Activated CD4-positive, alpha-beta T cell treated with anti-CD3 and anti-CD28 coated beads, Interleukin-2, amount 10 ng/mL, durations not matched to agents 24 days and 14 days (primary cell): ENCODE measurements at regions of chr7 and their contacts with region 1.

Region 1: GRCh38 chr7:105808703-105809590 is 67.5 kb downstream of the ATXN7L1 start:
- DNase-seq: peak; percentile 93
- H3K4me3 Mint-ChIP-seq: peak overlapping the region; percentile 71
- H3K27ac Mint-ChIP-seq: peak overlapping the region; percentile 92
- H3K4me1 Mint-ChIP-seq: peaks cover 75% of the 10 kb centered on the region
- H3K27me3 Mint-ChIP-seq: peaks cover 2% of the 10 kb centered on the region

Region 2: DNA sequence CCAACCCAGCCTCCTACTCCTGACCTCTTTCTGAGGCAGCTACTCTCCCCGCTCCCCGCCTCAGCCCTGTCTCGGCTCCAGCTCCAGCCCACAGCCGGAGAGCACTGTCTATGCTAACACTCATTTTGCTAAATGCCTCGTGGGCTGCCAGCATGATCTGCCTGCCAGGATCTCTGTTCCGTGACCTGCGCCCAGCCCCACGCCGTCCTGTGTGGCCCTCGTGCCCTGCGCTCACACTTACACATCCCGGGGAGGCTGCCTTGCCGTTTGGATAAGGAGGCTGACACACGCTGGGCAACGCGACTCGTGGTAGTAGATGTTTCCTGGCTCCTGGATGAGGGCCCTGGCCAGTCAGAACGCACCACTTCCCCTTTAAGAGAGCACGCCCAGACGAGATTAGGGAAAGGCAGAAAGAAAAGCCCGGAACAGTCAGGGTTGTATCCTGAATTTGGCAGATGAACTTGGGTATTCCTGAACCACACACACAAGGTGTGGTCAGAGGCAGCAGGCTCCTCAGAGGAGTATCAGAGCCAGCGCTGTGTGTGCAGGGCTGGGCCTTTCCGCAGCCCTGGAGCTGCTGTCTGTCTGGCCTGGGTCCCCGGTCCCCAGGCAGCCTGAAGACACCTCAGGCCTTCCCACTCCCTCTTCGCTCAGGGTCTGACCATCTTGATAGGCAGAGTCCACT is 130.0 kb before region 1 on chr7:
- intact Hi-C with region 1: loop called (anchors 5 kb)
- DNase-seq: peak; percentile 81
- H3K4me3 Mint-ChIP-seq: peak overlapping the region; percentile 90
- H3K27ac Mint-ChIP-seq: peak overlapping the region; percentile 93
- H3K4me1 Mint-ChIP-seq: peaks cover 52% of the 10 kb centered on the region
- H3K27me3 Mint-ChIP-seq: peaks cover 2% of the 10 kb centered on the region

Region 3: GRCh38 chr7:105782391-105783042 is 26.4 kb before region 1 on chr7:
- intact Hi-C with region 1: loop called (anchors 1 kb)
- DNase-seq: peak; percentile 64
- H3K4me3 Mint-ChIP-seq: no peak overlapping the region
- H3K27ac Mint-ChIP-seq: no peak overlapping the region
- H3K4me1 Mint-ChIP-seq: peaks cover 13% of the 10 kb centered on the region
- H3K27me3 Mint-ChIP-seq: peaks cover 32% of the 10 kb centered on the region

Region 4: DNA sequence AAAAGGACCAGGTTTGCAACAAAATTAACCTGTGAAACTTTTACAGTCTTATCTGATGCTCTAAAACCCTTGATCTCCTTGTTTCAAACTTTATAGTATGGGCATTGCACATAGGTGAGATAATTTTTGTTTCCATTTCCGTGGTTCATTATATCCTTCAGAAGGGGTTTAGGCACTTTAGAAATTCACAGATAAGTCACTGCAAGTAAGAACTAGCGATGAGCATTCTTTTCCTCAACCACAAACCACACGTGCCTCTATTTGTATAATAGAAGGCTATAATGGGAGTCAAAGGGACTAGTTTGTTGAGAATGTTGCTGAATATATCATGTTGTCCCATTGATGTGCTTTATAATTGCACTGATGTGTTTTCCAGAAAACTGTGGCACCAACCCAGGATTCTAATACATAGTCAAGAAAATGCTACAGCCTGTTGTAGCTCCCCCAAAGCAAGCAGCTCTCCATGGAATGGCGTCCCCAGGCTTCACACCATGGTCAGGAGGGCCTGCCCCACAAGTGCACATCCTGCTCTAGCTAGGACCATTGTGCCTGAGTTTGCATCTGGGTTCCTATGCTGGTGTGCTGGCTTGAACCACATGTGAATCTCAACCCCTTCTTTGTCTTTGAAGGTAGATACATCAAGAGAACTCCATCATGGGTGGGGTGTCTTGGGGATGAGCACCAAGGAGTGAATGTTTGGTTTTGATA is 81.5 kb after region 1 on chr7:
- intact Hi-C with region 1: loop called (anchors 1 kb)
- DNase-seq: no peak
- H3K4me3 Mint-ChIP-seq: no peak overlapping the region
- H3K27ac Mint-ChIP-seq: no peak overlapping the region
- H3K4me1 Mint-ChIP-seq: peaks cover 8% of the 10 kb centered on the region
- H3K27me3 Mint-ChIP-seq: peaks cover 29% of the 10 kb centered on the region

Region 5: GRCh38 chr7:105916603-105917002 is 107.7 kb after region 1 on chr7:
- intact Hi-C with region 1: no loop called
- DNase-seq: no peak
- H3K4me3 Mint-ChIP-seq: no peak overlapping the region
- H3K27ac Mint-ChIP-seq: no peak overlapping the region
- H3K4me1 Mint-ChIP-seq: no peaks in the 10 kb centered on the region
- H3K27me3 Mint-ChIP-seq: peaks cover 33% of the 10 kb centered on the region

Region 6: DNA sequence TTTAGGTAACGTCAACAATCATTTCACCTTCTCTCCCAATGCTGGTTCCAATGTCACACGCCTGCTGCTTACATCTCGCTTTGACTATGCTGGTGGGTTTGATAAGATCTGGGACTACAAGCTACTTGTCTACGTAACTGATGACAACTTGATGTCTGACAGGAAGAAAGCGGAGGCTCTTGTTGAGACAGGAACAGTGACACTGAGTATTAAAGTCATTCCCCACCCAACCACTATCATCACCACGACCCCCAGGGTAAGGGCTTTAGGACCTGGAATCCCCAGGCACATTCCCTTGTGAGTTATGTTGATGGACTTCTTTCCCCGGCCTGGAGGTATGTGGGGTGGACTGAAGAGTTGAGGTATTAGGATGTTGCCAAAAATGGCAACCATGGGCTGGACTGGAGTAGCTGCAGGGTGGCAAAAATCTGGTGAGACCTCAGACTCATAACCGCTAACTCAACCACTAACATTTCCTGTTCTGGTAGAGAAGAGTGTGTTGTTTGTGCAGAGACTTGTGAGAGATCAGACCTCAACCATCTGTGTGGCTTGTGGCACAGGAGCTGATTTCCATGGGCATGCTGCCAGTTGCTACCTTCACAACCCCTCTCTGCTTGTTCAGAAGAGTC is 213.4 kb after region 1 on chr7:
- intact Hi-C with region 1: loop called (anchors 1 kb)
- DNase-seq: peak; percentile 88
- H3K4me3 Mint-ChIP-seq: peak overlapping the region; percentile 63
- H3K27ac Mint-ChIP-seq: peak overlapping the region; percentile 83
- H3K4me1 Mint-ChIP-seq: peaks cover 56% of the 10 kb centered on the region
- H3K27me3 Mint-ChIP-seq: peaks cover 5% of the 10 kb centered on the region

Region 7: GRCh38 chr7:106346678-106347217 is 537.8 kb after region 1 on chr7:
- intact Hi-C with region 1: loop called (anchors 1 kb)
- DNase-seq: peak; percentile 93
- H3K4me3 Mint-ChIP-seq: peak overlapping the region; percentile 72
- H3K27ac Mint-ChIP-seq: peak overlapping the region; percentile 99
- H3K4me1 Mint-ChIP-seq: peaks cover 48% of the 10 kb centered on the region
- H3K27me3 Mint-ChIP-seq: no peaks in the 10 kb centered on the region

Region 8: GRCh38 chr7:106693677-106694353 is 884.9 kb after region 1 on chr7:
- intact Hi-C with region 1: no loop called
- DNase-seq: no peak
- H3K4me3 Mint-ChIP-seq: no peak overlapping the region
- H3K27ac Mint-ChIP-seq: no peak overlapping the region
- H3K4me1 Mint-ChIP-seq: peaks cover 7% of the 10 kb centered on the region
- H3K27me3 Mint-ChIP-seq: no peaks in the 10 kb centered on the region